B cell (primary cell): ENCODE measurements at regions of chr10 and their contacts with region 1.

Region 1: GRCh38 chr10:110803830-110804338 is 67.8 kb upstream of the PDCD4 start:
- DNase-seq: peak; percentile 71
- ATAC-seq: peak; percentile 63
- H3K4me3 ChIP-seq: peak overlapping the region in 1 of 5 experiments; percentile 28
- H3K4me3 Mint-ChIP-seq: peak overlapping the region; percentile 77
- H3K27ac ChIP-seq: peak overlapping the region in 1 of 2 donors; percentile 23
- H3K27ac Mint-ChIP-seq: peak overlapping the region; percentile 81
- H3K4me1 ChIP-seq: peaks cover 24 to 30% of the 10 kb centered on the region in 2 donors
- H3K4me1 Mint-ChIP-seq: peaks cover 30% of the 10 kb centered on the region
- H3K27me3 ChIP-seq: no peaks in the 10 kb centered on the region
- H3K27me3 Mint-ChIP-seq: peaks cover 8% of the 10 kb centered on the region
- CTCF ChIP-seq: peak; percentile 73

Region 2: GRCh38 chr10:110746254-110746826 is 57.5 kb before region 1 on chr10:
- CTCF ChIA-PET with region 1: interaction called, 14 read pairs
- POLR2A ChIA-PET with region 1: interaction called, 3 read pairs
- intact Hi-C with region 1: loop called (anchors 5 kb)
- DNase-seq: peak; percentile 70
- ATAC-seq: peak; percentile 68
- H3K4me3 ChIP-seq: no peak overlapping the region
- H3K4me3 Mint-ChIP-seq: no peak overlapping the region
- H3K27ac ChIP-seq: no peak overlapping the region
- H3K27ac Mint-ChIP-seq: no peak overlapping the region
- H3K4me1 ChIP-seq: peaks cover 0 to 6% of the 10 kb centered on the region in 2 donors
- H3K4me1 Mint-ChIP-seq: peaks cover 3% of the 10 kb centered on the region
- H3K27me3 ChIP-seq: peaks cover 0 to 5% (median 0%) of the 10 kb centered on the region in 4 experiments
- H3K27me3 Mint-ChIP-seq: peaks cover 5% of the 10 kb centered on the region
- CTCF ChIP-seq: peak; percentile 96

Region 3: GRCh38 chr10:110843031-110843430 is 39.1 kb after region 1 on chr10:
- CTCF ChIA-PET with region 1: interaction called, 45 read pairs
- POLR2A ChIA-PET with region 1: interaction called, 24 read pairs
- intact Hi-C with region 1: loop called (anchors 2 kb)
- DNase-seq: peak; percentile 95
- ATAC-seq: peak; percentile 67
- H3K4me3 ChIP-seq: peak overlapping the region in 4 of 5 experiments; percentile 1 to 50 (median 26)
- H3K4me3 Mint-ChIP-seq: peak overlapping the region; percentile 69
- H3K27ac ChIP-seq: peak overlapping the region; percentile 94 to 99
- H3K27ac Mint-ChIP-seq: peak overlapping the region; percentile 89
- H3K4me1 ChIP-seq: peaks cover 66 to 76% of the 10 kb centered on the region in 2 donors
- H3K4me1 Mint-ChIP-seq: peaks cover 72% of the 10 kb centered on the region
- H3K27me3 ChIP-seq: no peaks in the 10 kb centered on the region
- H3K27me3 Mint-ChIP-seq: no peaks in the 10 kb centered on the region
- CTCF ChIP-seq: no peak

Region 4: GRCh38 chr10:110864662-110865140 is 60.8 kb after region 1 on chr10:
- CTCF ChIA-PET with region 1: interaction called, 39 read pairs
- POLR2A ChIA-PET with region 1: interaction called, 4 read pairs
- intact Hi-C with region 1: loop called (anchors 2 kb)
- DNase-seq: peak; percentile 89
- ATAC-seq: peak; percentile 55
- H3K4me3 ChIP-seq: peak overlapping the region in 4 of 5 experiments; percentile 21 to 60 (median 38)
- H3K4me3 Mint-ChIP-seq: peak overlapping the region; percentile 85
- H3K27ac ChIP-seq: peak overlapping the region; percentile 94 to 96
- H3K27ac Mint-ChIP-seq: peak overlapping the region; percentile 97
- H3K4me1 ChIP-seq: peaks cover 97 to 100% of the 10 kb centered on the region in 2 donors
- H3K4me1 Mint-ChIP-seq: peaks cover 97% of the 10 kb centered on the region
- H3K27me3 ChIP-seq: no peaks in the 10 kb centered on the region
- H3K27me3 Mint-ChIP-seq: no peaks in the 10 kb centered on the region
- CTCF ChIP-seq: no peak

Region 5: GRCh38 chr10:110883924-110884323 is 80.0 kb after region 1 on chr10:
- CTCF ChIA-PET with region 1: interaction called, 169 read pairs
- POLR2A ChIA-PET with region 1: no interaction called
- intact Hi-C with region 1: no loop called
- DNase-seq: no peak
- ATAC-seq: no peak
- H3K4me3 ChIP-seq: no peak overlapping the region
- H3K4me3 Mint-ChIP-seq: no peak overlapping the region
- H3K27ac ChIP-seq: peak overlapping the region; percentile 13 to 61
- H3K27ac Mint-ChIP-seq: peak overlapping the region; percentile 69
- H3K4me1 ChIP-seq: peaks cover 0 to 7% of the 10 kb centered on the region in 2 donors
- H3K4me1 Mint-ChIP-seq: peaks cover 32% of the 10 kb centered on the region
- H3K27me3 ChIP-seq: no peaks in the 10 kb centered on the region
- H3K27me3 Mint-ChIP-seq: no peaks in the 10 kb centered on the region
- CTCF ChIP-seq: no peak

Region 6: DNA sequence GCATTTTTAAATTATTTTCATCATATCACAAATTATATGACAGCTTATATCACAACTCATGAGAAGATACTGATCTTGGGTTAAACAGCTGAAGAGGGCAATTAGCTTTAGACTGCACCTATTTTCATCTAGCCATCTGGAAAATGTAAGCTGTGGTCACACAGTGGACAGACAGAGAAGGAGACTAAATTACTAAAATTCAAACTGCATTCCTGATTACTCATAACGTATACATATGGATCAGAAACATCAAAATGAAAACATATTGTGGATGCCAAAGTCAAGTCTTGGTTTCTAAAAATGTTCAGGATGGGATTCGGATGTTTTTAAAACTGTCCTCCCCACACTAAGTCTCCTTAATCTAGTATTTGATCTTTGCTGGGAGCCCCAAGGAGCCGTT is 108.5 kb after region 1 on chr10:
- CTCF ChIA-PET with region 1: interaction called, 15 read pairs
- POLR2A ChIA-PET with region 1: no interaction called
- intact Hi-C with region 1: no loop called
- DNase-seq: no peak
- ATAC-seq: no peak
- H3K4me3 ChIP-seq: no peak overlapping the region
- H3K4me3 Mint-ChIP-seq: no peak overlapping the region
- H3K27ac ChIP-seq: no peak overlapping the region
- H3K27ac Mint-ChIP-seq: no peak overlapping the region
- H3K4me1 ChIP-seq: peaks cover 0 to 10% of the 10 kb centered on the region in 2 donors
- H3K4me1 Mint-ChIP-seq: peaks cover 15% of the 10 kb centered on the region
- H3K27me3 ChIP-seq: no peaks in the 10 kb centered on the region
- H3K27me3 Mint-ChIP-seq: no peaks in the 10 kb centered on the region
- CTCF ChIP-seq: no peak